ENCODE measurements at regions of chr12 and their contacts with region 1.

Region 1: DNA sequence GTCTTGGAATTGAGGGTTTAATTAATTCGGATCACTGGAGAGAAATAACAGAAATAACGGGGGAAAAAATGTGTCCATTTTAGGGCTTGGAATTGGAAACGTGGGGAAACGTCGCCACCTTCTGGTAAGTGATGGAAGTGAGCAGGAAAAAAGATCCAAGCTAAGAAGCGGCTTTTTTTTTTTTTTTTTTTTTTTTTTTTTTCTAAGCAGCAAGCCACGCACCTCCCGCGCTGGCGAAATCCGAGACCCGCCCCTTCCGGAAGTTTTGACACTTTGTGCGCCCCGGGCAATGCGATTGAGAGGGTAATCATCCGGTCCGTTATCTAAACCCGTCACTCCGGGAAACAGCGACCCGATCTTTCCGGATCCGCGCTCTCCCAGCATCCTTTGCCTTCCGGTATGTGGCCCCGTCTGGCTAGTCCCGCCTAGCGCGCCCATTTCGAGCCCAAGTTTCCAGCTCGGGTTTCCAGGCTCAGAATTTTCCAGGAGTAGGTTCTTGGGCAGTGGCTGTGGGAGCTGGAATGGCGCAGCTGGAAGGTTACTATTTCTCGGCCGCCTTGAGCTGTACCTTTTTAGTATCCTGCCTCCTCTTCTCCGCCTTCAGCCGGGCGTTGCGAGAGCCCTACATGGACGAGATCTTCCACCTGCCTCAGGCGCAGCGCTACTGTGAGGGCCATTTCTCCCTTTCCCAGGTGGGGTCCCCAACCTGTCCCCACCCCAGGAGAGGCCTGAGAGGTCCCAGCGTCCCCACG is at the start of gene ALG10:
- DNase-seq: peak; percentile 95
- H3K4me3 Mint-ChIP-seq: peak within 1 kb of the TSS; percentile 96
- H3K27ac Mint-ChIP-seq: peak within 1 kb of the TSS; percentile 93
- H3K4me1 Mint-ChIP-seq: peaks cover 35% of the 10 kb centered on the region
- H3K27me3 Mint-ChIP-seq: no peaks in the 10 kb centered on the region
- total RNA-seq, gene ALG10: 20.3 and 28.5 TPM in 2 replicates

Region 2: DNA sequence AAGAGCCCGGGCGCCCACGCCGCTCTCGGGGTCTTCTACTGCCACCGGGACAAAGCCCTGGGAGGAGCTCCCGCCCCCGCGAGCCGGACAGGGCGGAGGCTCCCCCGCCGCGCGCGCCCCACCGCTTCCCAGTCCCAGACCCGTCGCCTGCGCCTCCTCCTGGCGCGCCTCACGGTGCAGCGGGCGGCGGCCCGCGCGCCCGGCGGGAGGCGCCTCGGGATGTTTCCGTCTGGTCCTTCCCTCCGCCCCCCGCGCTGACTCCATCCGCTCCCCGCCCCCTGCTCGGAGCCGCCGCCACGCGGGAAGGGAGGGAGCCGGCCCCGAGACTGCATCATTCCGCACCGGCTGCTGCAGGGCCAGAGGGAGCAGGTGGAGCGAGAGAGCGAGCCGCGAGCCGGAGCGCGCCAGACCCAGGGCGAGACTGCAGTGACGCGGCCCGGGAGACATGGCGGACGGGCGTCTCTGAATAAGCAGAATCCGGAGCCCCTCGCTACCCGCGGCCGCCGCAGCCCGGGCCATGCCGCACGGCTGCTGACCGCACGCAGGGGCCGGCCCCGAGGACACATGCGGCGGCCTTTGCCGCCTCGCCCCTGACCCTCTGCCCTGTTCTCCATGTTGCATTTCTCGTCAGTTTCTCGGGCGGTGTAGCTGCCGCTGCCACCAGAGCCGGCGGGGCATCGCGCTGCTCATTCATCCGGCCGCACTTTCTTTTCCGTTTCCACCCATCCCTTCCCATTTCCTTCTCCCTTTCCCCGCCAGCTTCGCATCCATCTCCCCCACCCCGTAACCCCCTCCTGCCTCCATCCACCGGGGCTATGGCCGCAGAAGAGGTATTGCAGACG is 1915.5 kb before region 1 on chr12 and contains the start of gene BICD1:
- intact Hi-C with region 1: loop called (anchors 10 kb)
- DNase-seq: peak; percentile 76
- H3K4me3 Mint-ChIP-seq: peak within 1 kb of the TSS; percentile 98
- H3K27ac Mint-ChIP-seq: peak within 1 kb of the TSS; percentile 87
- H3K4me1 Mint-ChIP-seq: peaks cover 36% of the 10 kb centered on the region
- H3K27me3 Mint-ChIP-seq: peaks cover 19% of the 10 kb centered on the region
- total RNA-seq, gene BICD1: 20.9 and 22.2 TPM in 2 replicates

Region 3: DNA sequence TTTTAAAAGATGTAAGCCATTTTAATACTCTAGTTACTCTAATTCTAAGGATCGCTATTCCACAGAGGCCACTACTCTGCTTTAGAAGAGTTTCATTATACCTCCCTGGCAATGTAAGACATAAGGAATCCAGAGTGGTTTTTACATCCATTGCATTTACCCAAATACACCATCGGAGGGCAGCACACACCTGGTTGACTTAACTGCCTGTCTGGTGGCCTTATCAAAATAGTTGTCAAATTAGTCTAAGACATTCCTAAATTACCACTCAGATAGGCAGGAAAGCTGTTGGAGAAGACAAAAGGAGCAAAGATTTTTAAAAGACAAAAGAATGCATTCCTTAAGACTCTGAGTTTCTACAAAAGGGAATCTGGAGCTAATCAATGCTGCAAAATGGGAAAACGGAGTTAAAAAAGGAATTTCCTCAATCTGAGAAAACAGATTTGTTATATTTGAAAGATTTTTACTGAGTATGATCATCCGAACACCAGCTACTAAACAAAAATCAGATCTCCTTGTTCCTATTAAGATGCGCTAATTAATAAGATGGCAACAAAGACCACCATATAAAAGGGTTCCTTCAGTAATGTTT is 1656.7 kb before region 1 on chr12:
- intact Hi-C with region 1: loop called (anchors 5 kb)
- DNase-seq: peak; percentile 14
- H3K4me3 Mint-ChIP-seq: no peak overlapping the region
- H3K27ac Mint-ChIP-seq: no peak overlapping the region
- H3K4me1 Mint-ChIP-seq: no peaks in the 10 kb centered on the region
- H3K27me3 Mint-ChIP-seq: no peaks in the 10 kb centered on the region

Region 4: DNA sequence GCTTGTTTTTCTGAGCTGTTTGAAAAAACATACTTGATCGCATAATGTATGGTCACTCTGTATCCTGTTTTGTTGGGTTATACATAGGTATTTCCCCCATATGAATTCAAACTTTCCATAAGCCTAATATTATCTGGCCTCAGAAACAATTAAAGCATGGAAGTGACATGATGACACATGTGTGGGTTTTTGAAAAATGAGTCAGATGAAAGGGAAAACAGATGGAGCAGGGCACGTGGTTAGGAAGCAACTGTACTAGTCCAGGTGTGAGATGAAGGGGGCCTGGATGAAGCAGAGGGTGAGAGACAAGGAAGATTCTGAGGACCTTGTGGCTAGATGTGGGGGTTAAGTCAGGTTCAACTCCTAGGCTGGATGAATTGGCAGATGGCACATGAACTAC is 1435.9 kb before region 1 on chr12:
- intact Hi-C with region 1: loop called (anchors 5 kb)
- DNase-seq: no peak
- H3K4me3 Mint-ChIP-seq: peak overlapping the region; percentile 15
- H3K27ac Mint-ChIP-seq: peak overlapping the region; percentile 82
- H3K4me1 Mint-ChIP-seq: peaks cover 65% of the 10 kb centered on the region
- H3K27me3 Mint-ChIP-seq: no peaks in the 10 kb centered on the region

Region 5: DNA sequence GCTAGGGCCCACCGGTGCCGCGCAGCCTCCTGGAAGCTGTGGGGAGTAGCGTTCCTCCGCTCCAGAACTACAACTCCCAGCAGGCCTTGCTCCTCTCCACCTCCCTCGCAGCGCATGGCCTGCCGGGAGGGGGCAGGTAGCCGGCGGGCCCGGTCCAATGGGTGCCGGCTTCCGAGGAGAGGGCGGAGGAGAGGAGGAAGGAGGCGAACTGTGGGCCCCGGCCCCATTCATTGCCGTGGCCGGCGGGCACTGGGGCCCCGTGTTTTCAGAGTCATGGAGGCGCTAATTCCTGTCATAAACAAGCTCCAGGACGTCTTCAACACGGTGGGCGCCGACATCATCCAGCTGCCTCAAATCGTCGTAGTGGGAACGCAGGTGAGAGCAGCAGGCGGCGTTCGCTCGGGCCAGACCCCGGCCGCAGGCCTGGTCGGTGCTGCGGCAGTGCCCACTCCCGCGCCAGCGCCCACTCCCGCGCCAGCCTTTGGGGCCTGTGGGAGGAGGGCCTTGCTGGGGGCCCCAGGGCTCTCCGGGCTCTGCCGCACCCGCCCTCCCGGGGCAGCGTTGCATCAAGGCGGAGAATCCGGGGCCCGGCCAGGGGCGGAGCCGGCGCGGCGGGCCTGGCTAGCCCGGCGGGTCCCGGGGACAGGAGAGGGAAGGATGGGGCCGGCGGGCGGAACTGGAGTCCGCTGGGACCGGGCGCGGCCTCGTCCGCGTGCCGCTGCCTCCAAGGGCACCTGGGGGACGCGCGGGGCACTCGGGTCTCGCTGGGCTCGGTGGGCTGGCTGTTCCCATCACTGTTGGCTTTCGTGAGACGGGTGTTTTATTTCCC is 1343.0 kb before region 1 on chr12 and contains the start of gene DNM1L:
- intact Hi-C with region 1: loop called (anchors 1 kb)
- DNase-seq: peak; percentile 90
- H3K4me3 Mint-ChIP-seq: peak within 1 kb of the TSS; percentile 95
- H3K27ac Mint-ChIP-seq: peak within 1 kb of the TSS; percentile 92
- H3K4me1 Mint-ChIP-seq: peaks cover 35% of the 10 kb centered on the region
- H3K27me3 Mint-ChIP-seq: no peaks in the 10 kb centered on the region
- total RNA-seq, gene DNM1L: 87.0 and 91.9 TPM in 2 replicates

Region 6: DNA sequence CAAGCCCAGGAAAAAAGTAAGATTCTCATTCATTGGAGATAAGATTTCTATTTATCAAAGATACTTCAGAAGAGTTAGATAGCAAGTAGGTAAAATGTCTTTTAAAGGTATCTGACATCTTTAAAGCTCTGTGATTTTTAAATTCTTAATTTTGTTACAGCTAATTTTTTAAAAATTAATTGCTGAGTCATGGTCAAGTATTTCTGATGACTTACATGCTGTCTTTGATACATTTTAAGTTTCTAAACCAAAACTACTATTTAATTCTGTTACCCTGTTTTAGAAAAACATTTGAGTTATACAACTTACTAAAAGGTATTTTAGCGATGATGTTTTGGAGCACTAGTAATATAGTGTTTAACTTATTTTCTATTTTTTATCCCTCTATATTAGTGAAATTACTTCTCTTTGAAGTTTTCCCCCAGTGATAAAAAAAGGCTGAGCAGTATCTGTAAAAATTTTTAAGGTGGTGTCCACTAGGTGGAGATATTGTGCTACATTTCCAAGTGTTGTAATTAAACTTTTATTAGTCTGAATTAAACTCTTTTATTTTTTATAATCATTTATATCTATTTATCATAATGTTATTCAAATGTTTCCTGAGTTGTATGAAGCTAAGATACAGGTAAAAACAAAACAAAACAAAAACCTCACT is 11.5 kb after region 1 on chr12:
- intact Hi-C with region 1: no loop called
- DNase-seq: no peak
- H3K4me3 Mint-ChIP-seq: no peak overlapping the region
- H3K27ac Mint-ChIP-seq: no peak overlapping the region
- H3K4me1 Mint-ChIP-seq: no peaks in the 10 kb centered on the region
- H3K27me3 Mint-ChIP-seq: no peaks in the 10 kb centered on the region

Region 7: DNA sequence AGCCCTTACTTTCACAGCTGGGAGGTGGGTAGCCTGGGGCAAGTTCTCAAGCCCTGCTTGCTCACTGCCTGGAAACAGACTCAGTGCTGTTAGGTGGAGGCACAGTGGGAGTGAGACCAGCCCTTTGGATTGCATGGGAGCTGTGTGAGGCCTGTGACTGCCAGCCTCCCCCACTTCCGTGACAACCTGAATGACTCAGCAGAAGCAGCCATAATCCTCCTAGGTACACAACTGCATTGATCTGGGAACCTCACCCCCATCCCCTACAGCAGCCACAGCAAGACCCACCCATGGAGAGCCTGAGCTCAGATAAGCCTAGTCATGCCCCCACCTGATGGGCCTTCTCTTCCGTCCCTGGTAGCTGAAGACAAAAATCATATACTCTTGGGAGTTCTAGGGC is 26.5 kb after region 1 on chr12:
- intact Hi-C with region 1: no loop called
- DNase-seq: no peak
- H3K4me3 Mint-ChIP-seq: no peak overlapping the region
- H3K27ac Mint-ChIP-seq: no peak overlapping the region
- H3K4me1 Mint-ChIP-seq: no peaks in the 10 kb centered on the region
- H3K27me3 Mint-ChIP-seq: no peaks in the 10 kb centered on the region

Region 8: GRCh38 chr12:34126239-34126641 is 104.0 kb after region 1 on chr12:
- intact Hi-C with region 1: loop called (anchors 2 kb)
- DNase-seq: no peak
- H3K4me3 Mint-ChIP-seq: peak overlapping the region; percentile 49
- H3K27ac Mint-ChIP-seq: peak overlapping the region; percentile 55
- H3K4me1 Mint-ChIP-seq: peaks cover 13% of the 10 kb centered on the region
- H3K27me3 Mint-ChIP-seq: peaks cover 4% of the 10 kb centered on the region

Measured in activated T-helper 1 cell treated with anti-CD3 and anti-CD28 coated beads, Interleukin-12 subunit alpha, Interleukin-12 subunit beta, Interleukin-2, Interleukin-4 antibody, amounts not matched to agents 30 ng/mL and 10 ng/mL and 1 ng/mL, durations not matched to agents 14 hours and 24 hours and 36 hours (primary cell).